Dorsolateral prefrontal cortex (tissue), 120 donors: ENCODE measurements at regions of chr6 and their contacts with region 1.

Region 1: GRCh38 chr6:157531169-157531985 is 150.4 kb downstream of the ZDHHC14 start:
- DNase-seq: no peak
- H3K4me3 ChIP-seq: no peak overlapping the region
- H3K27ac ChIP-seq: peak overlapping the region in 3 of 59 donors; percentile 7 to 61 (median 51)
- H3K27me3 ChIP-seq: no peaks in the 10 kb centered on the region
- CTCF ChIP-seq: no peak

Region 2: DNA sequence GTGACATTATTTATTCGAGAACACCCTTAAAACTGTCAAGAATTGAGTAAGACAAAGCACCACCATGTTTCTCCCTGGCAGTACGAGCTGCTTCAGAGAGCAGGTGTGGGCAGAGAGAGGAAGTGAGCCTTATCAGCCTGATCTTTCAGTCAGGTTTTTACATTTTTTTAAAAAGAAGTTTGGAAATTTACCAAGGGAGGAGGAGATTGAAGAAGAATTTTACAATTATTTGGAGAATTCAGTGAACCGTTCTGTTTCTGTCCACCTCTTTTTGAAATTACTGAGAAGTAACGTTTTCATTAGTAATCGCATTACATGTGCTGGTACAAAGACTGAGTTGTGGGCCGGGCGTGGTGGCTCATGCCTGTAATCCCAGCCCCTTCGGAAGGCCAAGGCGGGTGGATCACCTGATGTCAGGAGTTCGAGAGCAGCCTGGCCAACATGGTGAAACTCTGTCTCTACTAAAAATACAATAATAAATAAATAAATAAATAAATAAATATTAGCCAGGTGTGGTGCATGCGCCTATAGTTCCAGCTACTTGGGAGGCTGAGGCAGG is 74.8 kb before region 1 on chr6:
- intact Hi-C with region 1: loop called in 1 of 2 experiments (anchors 5 kb)
- DNase-seq: no peak
- H3K4me3 ChIP-seq: peak overlapping the region in 5 of 59 donors; percentile 21 to 34 (median 31)
- H3K27ac ChIP-seq: peak overlapping the region in 58 of 59 donors; percentile 33 to 98 (median 92)
- H3K27me3 ChIP-seq: no peaks in the 10 kb centered on the region
- CTCF ChIP-seq: no peak

Region 3: GRCh38 chr6:157632821-157633220 is 101.4 kb after region 1 on chr6:
- intact Hi-C with region 1: no loop called
- DNase-seq: peak in 1 of 10 donors; percentile 40
- H3K4me3 ChIP-seq: no peak overlapping the region
- H3K27ac ChIP-seq: no peak overlapping the region
- H3K27me3 ChIP-seq: no peaks in the 10 kb centered on the region
- CTCF ChIP-seq: no peak